Natural killer cell (primary cell): ENCODE measurements at regions of chr3 and their contacts with region 1.

Region 1: DNA sequence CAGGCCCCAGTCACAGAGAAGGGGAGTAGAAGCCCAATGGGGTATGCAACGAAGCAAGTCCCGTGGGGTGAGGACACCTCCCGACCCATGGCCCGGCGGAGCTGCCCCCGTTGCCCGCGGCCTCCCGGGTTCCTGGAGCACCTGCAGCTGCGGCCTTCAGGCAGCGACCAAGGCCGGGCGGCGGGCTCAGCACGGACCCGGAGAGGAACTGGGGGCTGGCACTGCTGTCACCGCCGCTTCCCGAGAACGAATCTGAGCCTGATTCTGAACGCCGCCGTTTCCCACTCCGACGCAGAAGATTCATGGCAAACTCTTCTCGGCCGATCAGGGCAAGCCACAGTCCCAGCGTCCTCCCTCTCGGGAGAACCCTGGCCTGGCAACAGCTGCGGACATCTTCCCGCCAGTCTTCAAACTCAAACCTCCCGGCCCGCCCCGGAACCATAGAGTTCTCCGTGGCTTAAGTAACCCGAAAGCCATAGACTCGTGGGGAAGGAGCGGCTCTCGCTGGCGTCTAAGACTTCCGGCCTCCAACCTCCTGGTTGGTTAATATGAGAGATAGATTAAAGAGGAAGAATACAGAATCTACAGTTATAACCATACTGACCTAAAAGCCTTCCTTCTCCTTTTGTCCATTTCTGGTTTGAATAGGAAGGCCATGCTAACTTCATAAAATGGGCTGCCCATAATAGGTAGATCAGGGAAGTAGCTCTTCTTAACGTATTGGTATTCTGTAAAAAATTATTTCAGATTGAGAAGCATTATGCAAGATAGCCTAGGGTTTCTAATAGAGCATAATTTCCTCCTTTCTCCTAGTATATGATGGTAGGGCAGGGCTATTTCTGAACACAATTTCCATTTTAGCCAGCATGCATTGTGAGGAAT is at the start of gene POLQ:
- DNase-seq: peak; percentile 78 to 93
- ATAC-seq: peak; percentile 97 to 99 (median 99)
- H3K4me3 ChIP-seq: peak within 1 kb of the TSS; percentile 63
- H3K4me3 Mint-ChIP-seq: peak within 1 kb of the TSS; percentile 96
- H3K27ac ChIP-seq: peak within 1 kb of the TSS; percentile 72
- H3K27ac Mint-ChIP-seq: peak within 1 kb of the TSS; percentile 82 to 97
- H3K4me1 ChIP-seq: peaks cover 9% of the 10 kb centered on the region
- H3K4me1 Mint-ChIP-seq: peaks cover 13 to 21% of the 10 kb centered on the region in 2 donors
- H3K27me3 ChIP-seq: no peaks in the 10 kb centered on the region
- H3K27me3 Mint-ChIP-seq: no peaks in the 10 kb centered on the region
- CTCF ChIP-seq: no peak
- total RNA-seq, gene POLQ: 0.66 to 1.2 (median 0.70) TPM

Region 2: GRCh38 chr3:121660356-121661171 is 114.7 kb after region 1 on chr3 and contains the start of gene HCLS1:
- intact Hi-C with region 1: loop called (anchors 1 kb)
- DNase-seq: peak; percentile 68 to 88
- ATAC-seq: peak; percentile 85 to 90 (median 85)
- H3K4me3 ChIP-seq: peak within 1 kb of the TSS; percentile 77
- H3K4me3 Mint-ChIP-seq: peak within 1 kb of the TSS; percentile 96
- H3K27ac ChIP-seq: peak within 1 kb of the TSS; percentile 94
- H3K27ac Mint-ChIP-seq: peak within 1 kb of the TSS; percentile 97 to 99
- H3K4me1 ChIP-seq: peaks cover 40% of the 10 kb centered on the region
- H3K4me1 Mint-ChIP-seq: peaks cover 56% of the 10 kb centered on the region in 2 donors
- H3K27me3 ChIP-seq: no peaks in the 10 kb centered on the region
- H3K27me3 Mint-ChIP-seq: no peaks in the 10 kb centered on the region
- CTCF ChIP-seq: no peak
- total RNA-seq, gene HCLS1: 331 to 356 (median 336) TPM

Region 3: GRCh38 chr3:121690777-121691405 is 145.1 kb after region 1 on chr3:
- intact Hi-C with region 1: no loop called
- DNase-seq: no peak
- ATAC-seq: no peak
- H3K4me3 ChIP-seq: no peak overlapping the region
- H3K4me3 Mint-ChIP-seq: no peak overlapping the region
- H3K27ac ChIP-seq: no peak overlapping the region
- H3K27ac Mint-ChIP-seq: no peak overlapping the region
- H3K4me1 ChIP-seq: no peaks in the 10 kb centered on the region
- H3K4me1 Mint-ChIP-seq: no peaks in the 10 kb centered on the region
- H3K27me3 ChIP-seq: no peaks in the 10 kb centered on the region
- H3K27me3 Mint-ChIP-seq: no peaks in the 10 kb centered on the region
- CTCF ChIP-seq: no peak

Region 4: GRCh38 chr3:121817753-121818152 is 271.9 kb after region 1 on chr3:
- intact Hi-C with region 1: no loop called
- DNase-seq: no peak
- ATAC-seq: no peak
- H3K4me3 ChIP-seq: no peak overlapping the region
- H3K4me3 Mint-ChIP-seq: no peak overlapping the region
- H3K27ac ChIP-seq: no peak overlapping the region
- H3K27ac Mint-ChIP-seq: peak overlapping the region; percentile 13 to 32
- H3K4me1 ChIP-seq: no peaks in the 10 kb centered on the region
- H3K4me1 Mint-ChIP-seq: peaks cover 46 to 65% of the 10 kb centered on the region in 2 donors
- H3K27me3 ChIP-seq: no peaks in the 10 kb centered on the region
- H3K27me3 Mint-ChIP-seq: no peaks in the 10 kb centered on the region
- CTCF ChIP-seq: no peak

Region 5: GRCh38 chr3:121834696-121835464 is 289.1 kb after region 1 on chr3 and contains the starts of genes EAF2 and IQCB1:
- intact Hi-C with region 1: loop called (anchors 10 kb)
- DNase-seq: peak; percentile 95 to 99
- ATAC-seq: peak; percentile 97 to 100 (median 98)
- H3K4me3 ChIP-seq: peak within 1 kb of the TSS; percentile 83
- H3K4me3 Mint-ChIP-seq: peak within 1 kb of the TSS; percentile 98
- H3K27ac ChIP-seq: peak within 1 kb of the TSS; percentile 91
- H3K27ac Mint-ChIP-seq: peak within 1 kb of the TSS; percentile 92 to 97
- H3K4me1 ChIP-seq: peaks cover 14% of the 10 kb centered on the region
- H3K4me1 Mint-ChIP-seq: peaks cover 48 to 50% of the 10 kb centered on the region in 2 donors
- H3K27me3 ChIP-seq: no peaks in the 10 kb centered on the region
- H3K27me3 Mint-ChIP-seq: peaks cover 0 to 9% of the 10 kb centered on the region in 2 donors
- CTCF ChIP-seq: no peak
- total RNA-seq, gene EAF2: 5.1 to 7.4 (median 5.4) TPM
- total RNA-seq, gene IQCB1: 42.6 to 44.3 (median 42.6) TPM

Region 6: DNA sequence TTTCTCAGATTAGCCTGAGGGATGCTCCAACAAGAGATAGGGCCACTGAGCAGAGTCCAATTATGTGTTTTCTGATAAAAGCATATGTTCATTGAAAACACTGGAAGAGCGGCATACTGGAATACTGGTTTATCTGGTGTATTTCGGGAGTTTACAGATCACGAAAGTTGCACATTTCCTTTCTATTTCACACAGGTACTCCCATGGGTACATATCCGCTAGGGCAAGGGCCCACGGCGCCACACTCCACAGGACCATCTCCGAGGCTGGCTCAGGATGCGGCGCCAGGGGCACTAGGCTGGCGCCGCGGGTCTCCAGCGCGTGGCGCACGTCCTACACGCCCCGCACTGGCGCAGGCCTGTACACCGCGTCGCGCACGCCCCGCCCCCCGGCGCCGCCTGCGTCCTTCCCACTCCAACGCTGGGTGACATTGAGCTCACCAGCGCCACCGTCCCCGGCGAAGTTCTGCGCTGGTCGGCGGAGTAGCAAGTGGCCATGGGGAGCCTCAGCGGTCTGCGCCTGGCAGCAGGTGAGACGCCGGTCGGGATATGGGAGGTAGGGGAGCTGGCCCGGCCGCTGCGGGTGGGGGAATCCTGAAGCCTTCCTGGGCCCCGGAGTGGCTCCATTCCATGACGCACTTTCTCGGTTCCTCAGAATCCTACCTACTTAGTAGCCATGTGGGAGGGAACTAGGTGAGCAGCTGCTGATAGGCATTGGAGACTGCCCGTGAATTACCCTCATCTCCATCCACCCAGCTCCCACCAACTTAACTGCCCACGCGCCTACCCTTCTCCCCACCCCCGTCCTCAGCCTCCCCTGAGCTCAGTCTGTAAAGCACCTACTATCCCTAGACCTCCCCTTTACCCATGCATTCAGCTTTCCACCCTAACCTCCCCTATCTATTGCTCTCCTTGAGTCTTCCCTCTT is 838.2 kb after region 1 on chr3 and contains the start of gene FAM162A:
- intact Hi-C with region 1: loop called (anchors 5 kb)
- DNase-seq: peak; percentile 88 to 97
- ATAC-seq: peak; percentile 93 to 99 (median 95)
- H3K4me3 ChIP-seq: peak within 1 kb of the TSS; percentile 87
- H3K4me3 Mint-ChIP-seq: peak within 1 kb of the TSS; percentile 91
- H3K27ac ChIP-seq: peak within 1 kb of the TSS; percentile 74
- H3K27ac Mint-ChIP-seq: peak within 1 kb of the TSS; percentile 86 to 89
- H3K4me1 ChIP-seq: peaks cover 15% of the 10 kb centered on the region
- H3K4me1 Mint-ChIP-seq: peaks cover 23% of the 10 kb centered on the region in 2 donors
- H3K27me3 ChIP-seq: no peaks in the 10 kb centered on the region
- H3K27me3 Mint-ChIP-seq: no peaks in the 10 kb centered on the region
- CTCF ChIP-seq: peak; percentile 63
- total RNA-seq, gene FAM162A: 12.2 to 18.4 (median 16.3) TPM

Region 7: GRCh38 chr3:122679085-122679881 is 1133.5 kb after region 1 on chr3:
- intact Hi-C with region 1: loop called (anchors 1 kb)
- DNase-seq: peak; percentile 75 to 94
- ATAC-seq: peak; percentile 65 to 75 (median 65)
- H3K4me3 ChIP-seq: peak overlapping the region; percentile 98
- H3K4me3 Mint-ChIP-seq: peak overlapping the region; percentile 90
- H3K27ac ChIP-seq: peak overlapping the region; percentile 96
- H3K27ac Mint-ChIP-seq: peak overlapping the region; percentile 84 to 99
- H3K4me1 ChIP-seq: peaks cover 40% of the 10 kb centered on the region
- H3K4me1 Mint-ChIP-seq: peaks cover 50 to 52% of the 10 kb centered on the region in 2 donors
- H3K27me3 ChIP-seq: no peaks in the 10 kb centered on the region
- H3K27me3 Mint-ChIP-seq: no peaks in the 10 kb centered on the region
- CTCF ChIP-seq: peak; percentile 82

Region 8: GRCh38 chr3:123489400-123490004 is 1943.7 kb after region 1 on chr3:
- intact Hi-C with region 1: loop called (anchors 5 kb)
- DNase-seq: peak; percentile 36 to 57
- ATAC-seq: peak in 2 of 3 donors; percentile 57 to 67
- H3K4me3 ChIP-seq: no peak overlapping the region
- H3K4me3 Mint-ChIP-seq: no peak overlapping the region
- H3K27ac ChIP-seq: no peak overlapping the region
- H3K27ac Mint-ChIP-seq: no peak overlapping the region
- H3K4me1 ChIP-seq: no peaks in the 10 kb centered on the region
- H3K4me1 Mint-ChIP-seq: peaks cover 13 to 27% of the 10 kb centered on the region in 2 donors
- H3K27me3 ChIP-seq: no peaks in the 10 kb centered on the region
- H3K27me3 Mint-ChIP-seq: peaks cover 0 to 5% of the 10 kb centered on the region in 2 donors
- CTCF ChIP-seq: peak; percentile 66